IMR-90 (cell line): ENCODE measurements at regions of chr1 and their contacts with region 1.

Region 1: GRCh38 chr1:223074445-223075300 is 68.4 kb downstream of the TLR5 start:
- DNase-seq: no peak
- ATAC-seq: peak; percentile 48
- H3K4me3 ChIP-seq: no peak overlapping the region
- H3K27ac ChIP-seq: no peak overlapping the region
- H3K4me1 ChIP-seq: no peaks in the 10 kb centered on the region
- H3K27me3 ChIP-seq: peaks cover 42% of the 10 kb centered on the region
- CTCF ChIP-seq: no peak
- POLR2A ChIP-seq: no peak
- RAD21 ChIP-seq: no peak

Region 2: DNA sequence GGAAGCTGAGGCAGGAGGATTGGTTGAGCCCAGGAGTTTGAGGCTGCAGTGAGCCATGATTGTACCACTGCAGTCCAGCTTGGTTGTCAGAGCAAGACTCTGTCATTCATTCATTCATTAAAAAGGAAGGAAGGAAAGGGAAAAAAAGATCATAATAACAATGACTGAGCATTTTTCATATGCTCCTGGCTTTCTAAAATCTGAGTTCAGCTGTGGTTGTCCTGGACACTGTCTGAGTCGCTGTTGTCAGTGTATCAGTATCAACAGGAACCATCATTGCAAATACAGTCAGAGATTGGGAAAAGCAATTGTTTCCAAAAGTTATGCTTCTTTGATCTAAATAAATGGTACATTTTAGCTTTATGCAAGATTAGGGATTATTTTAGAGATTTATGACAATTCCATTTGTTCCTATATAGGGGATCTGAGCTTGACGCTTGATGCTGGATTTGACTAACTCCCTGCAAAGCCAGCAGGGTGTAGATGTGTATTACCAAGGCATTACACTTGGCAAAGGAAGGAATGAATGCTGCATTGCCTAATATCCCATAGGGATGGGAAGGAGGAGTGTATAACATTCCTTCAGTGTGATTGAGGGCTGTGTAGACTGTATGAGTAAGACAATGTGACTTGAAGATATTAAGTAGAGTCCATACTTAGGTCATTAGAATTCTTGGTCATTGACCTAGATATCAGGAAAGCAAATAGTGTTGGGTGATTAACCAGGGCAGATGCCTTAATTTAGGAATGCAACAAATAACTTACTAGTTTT is 159.6 kb before region 1 on chr1:
- CTCF ChIA-PET with region 1: no interaction called
- POLR2A ChIA-PET with region 1: no interaction called
- dilution Hi-C with region 1: no loop called
- in situ Hi-C with region 1: no loop called
- intact Hi-C with region 1: loop called (anchors 10 kb)
- DNase-seq: peak; percentile 88
- ATAC-seq: peak; percentile 77
- H3K4me3 ChIP-seq: no peak overlapping the region
- H3K27ac ChIP-seq: no peak overlapping the region
- H3K4me1 ChIP-seq: peaks cover 5% of the 10 kb centered on the region
- H3K27me3 ChIP-seq: no peaks in the 10 kb centered on the region
- CTCF ChIP-seq: peak; percentile 26; the same call in 1 of the 2 replicates
- POLR2A ChIP-seq: no peak
- RAD21 ChIP-seq: peak; percentile 37

Region 3: DNA sequence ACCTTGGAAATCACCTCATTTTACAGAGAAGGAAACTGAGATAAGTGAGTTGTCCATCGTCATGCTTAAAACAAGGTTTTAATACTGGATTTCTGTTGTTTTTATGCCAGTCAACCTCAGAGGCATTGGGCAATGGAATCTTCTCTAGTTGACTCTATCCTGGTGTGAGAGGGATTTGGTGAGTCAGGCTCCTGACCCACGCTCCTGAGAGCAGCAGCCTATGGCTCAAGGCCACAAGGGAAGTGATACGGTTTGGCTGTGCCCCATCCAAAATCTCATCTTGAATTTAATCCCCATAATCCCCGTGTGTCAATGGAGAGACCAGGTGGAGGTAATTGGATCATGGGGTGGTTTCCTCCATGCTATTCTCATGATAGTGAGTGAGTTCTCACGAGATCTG is 21.7 kb before region 1 on chr1:
- CTCF ChIA-PET with region 1: no interaction called
- POLR2A ChIA-PET with region 1: no interaction called
- dilution Hi-C with region 1: no loop called
- in situ Hi-C with region 1: no loop called
- intact Hi-C with region 1: loop called (anchors 2 kb)
- DNase-seq: no peak
- ATAC-seq: no peak
- H3K4me3 ChIP-seq: no peak overlapping the region
- H3K27ac ChIP-seq: no peak overlapping the region
- H3K4me1 ChIP-seq: no peaks in the 10 kb centered on the region
- H3K27me3 ChIP-seq: peaks cover 16% of the 10 kb centered on the region
- CTCF ChIP-seq: no peak
- POLR2A ChIP-seq: no peak
- RAD21 ChIP-seq: no peak

Region 4: GRCh38 chr1:223390618-223391017 is 315.9 kb after region 1 on chr1:
- CTCF ChIA-PET with region 1: no interaction called
- POLR2A ChIA-PET with region 1: no interaction called
- dilution Hi-C with region 1: no loop called
- in situ Hi-C with region 1: no loop called
- intact Hi-C with region 1: no loop called
- DNase-seq: no peak
- ATAC-seq: no peak
- H3K4me3 ChIP-seq: no peak overlapping the region
- H3K27ac ChIP-seq: no peak overlapping the region
- H3K4me1 ChIP-seq: peaks cover 3% of the 10 kb centered on the region; the same call in 1 of the 2 replicates
- H3K27me3 ChIP-seq: peaks cover 53% of the 10 kb centered on the region
- CTCF ChIP-seq: no peak
- POLR2A ChIP-seq: no peak
- RAD21 ChIP-seq: no peak